ENCODE measurements at regions of chr2 and their contacts with region 1.

Region 1: GRCh38 chr2:11692966-11693521 is 23.0 kb upstream of the NTSR2 start:
- DNase-seq: peak; percentile 53 to 68
- H3K4me3 ChIP-seq: no peak overlapping the region
- H3K27ac ChIP-seq: no peak overlapping the region
- H3K4me1 ChIP-seq: no peaks in the 10 kb centered on the region
- H3K27me3 ChIP-seq: no peaks in the 10 kb centered on the region
- CTCF ChIP-seq: peak; percentile 64 to 82 (median 70)
- POLR2A ChIP-seq: no peak

Region 2: DNA sequence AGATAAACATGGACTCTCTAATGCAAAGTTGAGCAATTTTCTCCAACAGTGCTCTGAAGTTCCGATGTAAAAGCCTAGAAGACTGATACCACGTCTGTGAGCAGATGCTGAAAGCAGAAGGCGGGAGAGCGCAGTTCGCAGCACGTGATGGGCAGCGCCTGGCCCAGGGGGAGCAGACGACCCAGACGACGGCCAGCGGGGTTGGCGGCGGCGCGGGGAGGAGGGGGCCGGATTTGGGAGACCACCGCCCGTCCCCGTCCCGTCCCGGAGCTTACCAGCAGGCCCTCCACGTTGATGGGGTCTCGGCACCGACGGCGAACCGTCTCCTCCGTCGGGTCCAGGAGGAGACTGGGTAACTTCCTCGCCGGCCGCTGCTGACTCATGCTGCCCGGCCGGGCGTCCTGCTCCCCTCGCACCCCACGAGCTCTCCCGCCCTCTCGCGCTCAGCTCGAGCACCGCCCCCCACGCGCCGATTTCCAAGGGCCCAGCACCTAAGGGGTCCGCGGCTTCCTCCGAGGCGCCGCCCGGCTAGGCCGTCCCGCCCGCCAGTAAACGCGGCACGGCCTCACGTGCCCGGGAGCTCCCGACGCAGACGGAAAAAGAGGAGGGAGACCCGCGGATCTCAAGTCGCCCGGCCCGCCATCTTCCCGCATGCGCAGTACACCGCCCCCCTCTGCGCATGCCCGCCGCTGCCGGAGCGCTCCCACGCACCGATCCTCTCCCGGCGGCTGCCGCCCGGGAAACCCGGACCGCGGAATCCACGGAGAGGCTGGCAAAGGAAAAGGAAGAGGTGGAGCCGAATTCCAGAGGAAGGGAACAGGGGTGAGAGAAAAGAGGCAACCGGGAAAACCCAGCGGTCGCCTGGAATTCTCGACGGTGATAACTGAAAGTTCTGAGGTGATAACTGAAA is 227.3 kb before region 1 on chr2 and contains the start of gene E2F6:
- intact Hi-C with region 1: no loop called
- DNase-seq: peak; percentile 92 to 95
- H3K4me3 ChIP-seq: peak within 1 kb of the TSS; percentile 55 to 93
- H3K27ac ChIP-seq: peak within 1 kb of the TSS; percentile 91 to 97
- H3K4me1 ChIP-seq: peaks cover 6 to 7% of the 10 kb centered on the region in 2 donors
- H3K27me3 ChIP-seq: no peaks in the 10 kb centered on the region
- CTCF ChIP-seq: peak in 3 of 4 experiments; percentile 8 to 70 (median 27)
- POLR2A ChIP-seq: peak; percentile 66 to 95
- total RNA-seq, gene E2F6: 10.2 to 25.0 (median 20.7) TPM

Region 3: DNA sequence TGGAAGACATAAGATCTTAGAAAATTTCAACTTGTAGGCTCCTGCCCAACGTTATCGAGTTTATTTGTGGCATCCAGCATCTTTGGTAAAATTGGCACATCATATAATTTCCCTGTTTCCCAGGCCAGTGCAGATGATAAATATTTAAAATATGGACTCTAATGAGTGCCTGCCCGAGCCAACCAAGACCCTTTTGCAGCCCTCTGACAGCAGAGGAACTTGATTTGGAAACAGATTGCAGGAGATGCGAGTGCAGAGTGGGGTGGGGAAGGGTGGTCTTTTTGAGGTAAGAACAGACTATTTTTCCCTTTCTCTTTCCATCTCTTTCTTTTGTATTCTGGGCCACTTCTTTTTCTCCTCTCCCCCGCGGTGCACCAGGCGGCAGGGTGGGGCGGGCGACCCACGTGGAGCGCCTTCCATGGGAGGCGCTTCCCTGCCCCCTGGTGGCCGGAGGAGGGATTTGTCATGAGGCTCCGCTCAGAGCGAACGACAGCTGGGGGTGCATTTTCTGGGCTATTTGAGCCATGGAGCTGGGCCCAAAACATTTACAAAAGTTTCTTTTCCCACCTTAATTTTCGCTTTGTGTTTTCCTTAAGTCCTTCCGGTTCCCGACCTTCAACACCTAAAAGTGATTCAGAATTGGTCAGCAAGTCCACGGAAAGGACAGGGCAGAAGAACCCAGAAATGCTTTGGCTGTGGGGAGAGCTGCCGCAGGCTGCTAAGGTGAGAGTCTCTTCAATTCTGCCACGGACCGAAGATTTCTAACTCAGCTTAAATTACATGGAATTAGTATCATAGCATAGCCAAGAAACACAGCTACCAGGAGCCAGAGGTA is 86.1 kb after region 1 on chr2:
- intact Hi-C with region 1: loop called (anchors 5 kb)
- DNase-seq: peak; percentile 80 to 81
- H3K4me3 ChIP-seq: no peak overlapping the region
- H3K27ac ChIP-seq: no peak overlapping the region
- H3K4me1 ChIP-seq: no peaks in the 10 kb centered on the region
- H3K27me3 ChIP-seq: no peaks in the 10 kb centered on the region
- CTCF ChIP-seq: peak; percentile 96 to 97 (median 96)
- POLR2A ChIP-seq: no peak

Region 4: DNA sequence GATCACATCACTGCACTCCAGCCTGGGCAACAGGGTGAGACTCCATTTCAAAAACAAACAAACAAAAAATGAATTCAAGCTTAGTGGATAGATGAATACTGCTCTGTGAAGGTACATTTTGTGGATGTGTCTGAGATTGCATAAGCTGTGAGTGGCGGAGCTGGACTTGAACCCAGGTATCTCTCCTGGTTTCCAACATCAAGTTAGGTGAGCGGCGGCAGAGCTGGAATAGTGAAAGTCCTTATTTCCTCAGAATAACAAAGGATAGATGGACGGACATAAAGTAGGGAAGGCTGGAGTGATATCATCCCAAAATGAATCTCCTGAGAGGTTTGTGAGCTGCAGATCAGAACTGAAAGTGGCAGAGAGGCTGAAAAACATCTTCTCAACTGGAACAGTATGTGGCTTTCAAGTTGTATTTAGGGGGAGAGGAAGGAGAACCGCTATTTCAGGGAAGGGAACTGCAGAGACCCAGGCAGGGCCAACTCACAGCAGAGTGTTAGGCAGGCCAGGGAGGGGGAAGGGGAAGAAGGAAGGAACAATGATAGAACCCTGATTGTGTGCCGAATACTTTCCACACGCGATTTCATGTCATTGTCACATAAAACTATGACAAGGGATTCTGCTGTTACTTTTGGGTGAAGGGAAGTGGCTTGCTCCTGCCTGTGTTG is 159.6 kb after region 1 on chr2:
- intact Hi-C with region 1: no loop called
- DNase-seq: no peak
- H3K4me3 ChIP-seq: no peak overlapping the region
- H3K27ac ChIP-seq: no peak overlapping the region
- H3K4me1 ChIP-seq: no peaks in the 10 kb centered on the region
- H3K27me3 ChIP-seq: no peaks in the 10 kb centered on the region
- CTCF ChIP-seq: no peak
- POLR2A ChIP-seq: no peak

Region 5: GRCh38 chr2:12381543-12382325 is 688.7 kb after region 1 on chr2:
- intact Hi-C with region 1: no loop called
- DNase-seq: no peak
- H3K4me3 ChIP-seq: no peak overlapping the region
- H3K27ac ChIP-seq: no peak overlapping the region
- H3K4me1 ChIP-seq: no peaks in the 10 kb centered on the region
- H3K27me3 ChIP-seq: no peaks in the 10 kb centered on the region
- CTCF ChIP-seq: no peak
- POLR2A ChIP-seq: no peak